Naive thymus-derived CD8-positive, alpha-beta T cell (primary cell): ENCODE measurements at regions of chr1 and their contacts with region 1.

Region 1: GRCh38 chr1:45550401-45551351 is at the start of gene AKR1A1:
- DNase-seq: peak; percentile 77 to 92 (median 83)
- ATAC-seq: peak; percentile 93 to 95
- H3K4me3 Mint-ChIP-seq: peak within 1 kb of the TSS; percentile 95 to 98 (median 96)
- H3K27ac Mint-ChIP-seq: peak within 1 kb of the TSS; percentile 87 to 99 (median 96)
- H3K4me1 Mint-ChIP-seq: peaks cover 8 to 29% (median 25%) of the 10 kb centered on the region in 4 donors
- H3K27me3 Mint-ChIP-seq: no peaks in the 10 kb centered on the region
- polyA plus RNA-seq, gene AKR1A1: 82.8 to 96.3 (median 85.5) TPM

Region 2: GRCh38 chr1:45393718-45394302 is 156.9 kb before region 1 on chr1:
- POLR2A ChIA-PET with region 1: interaction called, 11 read pairs
- DNase-seq: peak in 1 of 10 donors; percentile 18
- ATAC-seq: peak in 1 of 2 donors; percentile 77
- H3K4me3 Mint-ChIP-seq: peak overlapping the region in 3 of 10 donors; percentile 48 to 60 (median 51)
- H3K27ac Mint-ChIP-seq: peak overlapping the region in 4 of 10 donors; percentile 68 to 89 (median 78)
- H3K4me1 Mint-ChIP-seq: peaks cover 4 to 30% (median 9%) of the 10 kb centered on the region in 4 donors
- H3K27me3 Mint-ChIP-seq: no peaks in the 10 kb centered on the region

Region 3: DNA sequence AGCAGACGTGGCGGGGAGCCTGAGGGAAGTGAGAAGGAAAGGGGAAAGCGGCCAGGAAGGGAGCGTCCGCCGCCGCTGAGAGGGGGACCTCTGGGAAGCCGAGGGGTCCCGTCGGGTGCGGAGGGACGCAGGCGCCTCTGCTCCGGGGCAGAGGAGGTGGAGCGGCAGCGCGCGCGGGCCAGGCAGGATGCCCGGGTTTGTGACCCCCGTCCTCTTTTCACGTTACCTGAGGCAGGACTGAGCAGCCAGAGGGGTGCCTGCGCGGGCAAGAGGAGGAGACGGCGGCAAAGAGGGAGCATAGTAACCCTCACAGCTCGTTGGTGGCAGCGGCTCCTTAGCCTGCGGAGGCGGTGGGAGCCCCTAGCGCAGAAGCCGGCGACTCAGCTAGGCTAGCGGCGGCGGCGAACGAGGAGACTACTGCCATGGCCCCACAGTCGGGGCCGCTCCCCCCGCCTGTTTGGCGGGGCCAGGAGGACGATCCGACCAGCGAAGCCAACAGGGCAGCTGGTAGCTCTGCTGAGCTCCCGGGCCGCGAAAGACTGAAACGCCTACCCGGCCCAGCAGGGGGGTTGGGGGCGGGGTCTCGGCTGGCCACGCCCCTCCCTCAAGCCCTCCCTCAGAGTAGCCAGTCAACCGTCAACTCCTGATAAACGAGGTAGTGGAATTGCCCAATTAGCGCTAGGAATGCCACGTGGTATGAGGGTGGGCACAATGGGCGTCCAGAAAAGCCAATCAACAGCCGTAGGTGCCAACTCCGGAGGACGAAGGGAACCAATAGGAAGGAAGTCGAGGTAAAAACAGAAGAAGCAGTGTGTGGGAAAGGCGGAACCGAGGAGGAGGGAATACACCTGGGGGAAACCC is 59.8 kb before region 1 on chr1 and contains the start of gene TESK2:
- POLR2A ChIA-PET with region 1: interaction called, 12 read pairs
- DNase-seq: peak; percentile 94 to 98 (median 97)
- ATAC-seq: peak; percentile 91 to 94
- H3K4me3 Mint-ChIP-seq: no peak within 1 kb of the TSS
- H3K27ac Mint-ChIP-seq: no peak within 1 kb of the TSS
- H3K4me1 Mint-ChIP-seq: peaks cover 6 to 13% (median 12%) of the 10 kb centered on the region in 4 donors
- H3K27me3 Mint-ChIP-seq: no peaks in the 10 kb centered on the region
- polyA plus RNA-seq, gene TESK2: 2.3 to 3.1 (median 2.7) TPM

Region 4: GRCh38 chr1:45499415-45499769 is 51.3 kb before region 1 on chr1:
- POLR2A ChIA-PET with region 1: interaction called, 17 read pairs
- DNase-seq: no peak
- ATAC-seq: no peak
- H3K4me3 Mint-ChIP-seq: peak overlapping the region; percentile 89 to 98 (median 95)
- H3K27ac Mint-ChIP-seq: peak overlapping the region; percentile 72 to 97 (median 95)
- H3K4me1 Mint-ChIP-seq: peaks cover 26 to 40% (median 36%) of the 10 kb centered on the region in 4 donors
- H3K27me3 Mint-ChIP-seq: no peaks in the 10 kb centered on the region

Region 5: GRCh38 chr1:45583264-45583665 is 32.6 kb after region 1 on chr1:
- POLR2A ChIA-PET with region 1: interaction called, 14 read pairs
- DNase-seq: peak in 9 of 10 donors; percentile 88 to 96 (median 94)
- ATAC-seq: peak; percentile 71 to 72
- H3K4me3 Mint-ChIP-seq: peak overlapping the region; percentile 93 to 100 (median 99)
- H3K27ac Mint-ChIP-seq: peak overlapping the region; percentile 94 to 100 (median 99)
- H3K4me1 Mint-ChIP-seq: peaks cover 15 to 41% (median 36%) of the 10 kb centered on the region in 4 donors
- H3K27me3 Mint-ChIP-seq: no peaks in the 10 kb centered on the region